Activated T-helper 2 cell treated with anti-CD3 and anti-CD28 coated beads, Interferon-gamma antibody, Interleukin-2, Interleukin-4, amounts not matched to agents 10 μg/mL and 5 μg/mL and 100 μg/mL, durations not matched to agents 14 hours and 24 hours and 36 hours (primary cell): ENCODE measurements at regions of chr22 and their contacts with region 1.

Region 1: DNA sequence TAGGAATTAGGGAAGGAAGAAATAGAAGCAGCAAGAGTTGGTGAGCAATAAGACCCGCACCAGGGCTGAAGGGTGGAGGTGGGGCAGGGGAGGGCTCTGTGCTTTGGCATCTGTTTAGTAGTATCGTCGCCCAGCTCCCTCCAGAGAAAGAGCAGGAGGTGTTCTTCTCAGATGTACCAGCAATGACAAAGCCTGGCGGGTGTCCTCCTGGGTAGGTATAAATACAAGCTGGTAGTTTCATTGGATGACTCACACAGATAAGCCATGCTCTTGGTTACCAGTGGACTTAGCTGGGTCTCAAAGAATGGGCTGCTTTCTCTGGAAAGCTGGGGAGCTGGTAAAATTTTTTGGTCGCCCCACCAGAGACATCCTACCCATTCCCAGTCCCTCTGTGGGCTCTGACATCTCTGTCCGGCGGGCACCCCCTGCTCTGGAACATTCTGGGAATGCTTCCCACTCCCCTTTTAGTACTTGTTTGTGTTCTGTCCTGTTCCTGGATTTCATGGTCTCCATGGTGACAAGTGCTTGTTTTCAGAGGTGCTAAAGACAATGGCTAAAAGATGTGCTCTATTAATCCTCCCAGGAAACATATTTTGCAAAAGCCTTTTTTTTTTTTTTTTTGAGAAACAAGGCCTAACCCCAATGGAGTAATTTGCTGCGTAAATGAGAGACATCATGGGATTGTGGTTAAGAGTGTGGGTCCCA is 15.4 kb upstream of the TUBA8 start:
- DNase-seq: no peak
- H3K4me3 Mint-ChIP-seq: no peak overlapping the region
- H3K27ac Mint-ChIP-seq: no peak overlapping the region
- H3K4me1 Mint-ChIP-seq: peaks cover 12% of the 10 kb centered on the region
- H3K27me3 Mint-ChIP-seq: no peaks in the 10 kb centered on the region

Region 2: GRCh38 chr22:18156850-18157713 is 61.8 kb after region 1 on chr22:
- intact Hi-C with region 1: loop called (anchors 5 kb)
- DNase-seq: no peak
- H3K4me3 Mint-ChIP-seq: no peak overlapping the region
- H3K27ac Mint-ChIP-seq: no peak overlapping the region
- H3K4me1 Mint-ChIP-seq: peaks cover 14% of the 10 kb centered on the region
- H3K27me3 Mint-ChIP-seq: no peaks in the 10 kb centered on the region